Testis (tissue), 5 donors: ENCODE measurements at regions of chr5 and their contacts with region 1.

Region 1: DNA sequence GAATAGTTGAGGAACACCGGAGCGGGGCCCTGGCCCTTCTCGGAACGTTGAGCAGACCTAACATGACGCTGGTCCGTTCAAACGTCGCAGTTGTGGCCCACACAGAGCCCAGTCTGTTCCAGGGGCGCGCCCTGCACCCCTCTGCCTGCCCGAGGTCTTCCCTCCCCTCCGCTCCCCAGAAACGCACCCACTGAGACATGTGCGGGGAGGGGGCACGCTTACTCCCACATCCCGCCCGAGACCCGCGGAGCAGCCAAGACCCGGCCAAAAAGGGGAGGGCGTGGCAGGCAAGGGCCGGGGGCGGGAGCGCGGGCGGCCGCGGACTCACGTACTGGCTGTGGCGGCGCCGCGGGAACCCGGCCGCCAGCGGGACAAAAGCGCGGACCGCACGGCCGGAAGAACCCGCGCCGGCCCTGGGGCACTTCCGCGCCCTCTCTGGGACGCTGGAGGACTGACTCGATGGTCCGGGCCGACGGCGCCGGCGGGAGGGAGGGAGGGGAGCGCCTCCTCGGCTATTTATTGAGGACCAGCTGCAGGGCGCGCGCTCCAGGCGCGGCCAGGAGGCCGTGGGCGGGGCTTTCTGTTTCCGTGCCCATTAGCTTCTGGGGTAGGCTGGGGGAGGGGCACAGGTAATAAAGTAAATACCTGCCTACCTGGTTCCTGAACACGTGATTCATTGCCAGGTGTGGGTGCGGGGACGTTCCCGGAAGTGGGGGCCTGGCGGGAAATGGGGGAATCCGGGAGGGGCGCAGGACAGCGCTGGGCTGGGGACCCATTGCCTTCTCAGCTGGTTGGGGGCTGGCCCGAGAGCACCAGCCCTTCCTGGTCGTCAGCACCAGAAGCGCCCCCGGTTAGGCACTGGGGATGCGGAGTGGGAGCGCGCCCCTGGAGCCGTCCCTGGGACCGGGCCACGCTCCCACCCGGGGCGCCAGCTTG is at the start of gene ZFP62:
- DNase-seq: peak; percentile 91
- H3K4me3 ChIP-seq: peak within 1 kb of the TSS; percentile 93 to 96
- H3K27ac ChIP-seq: peak within 1 kb of the TSS; percentile 86 to 92
- H3K4me1 ChIP-seq: peaks cover 9% of the 10 kb centered on the region
- H3K27me3 ChIP-seq: no peaks in the 10 kb centered on the region
- CTCF ChIP-seq: no peak
- POLR2A ChIP-seq: no peak
- total RNA-seq, gene ZFP62: 27.1 to 32.3 TPM

Region 2: DNA sequence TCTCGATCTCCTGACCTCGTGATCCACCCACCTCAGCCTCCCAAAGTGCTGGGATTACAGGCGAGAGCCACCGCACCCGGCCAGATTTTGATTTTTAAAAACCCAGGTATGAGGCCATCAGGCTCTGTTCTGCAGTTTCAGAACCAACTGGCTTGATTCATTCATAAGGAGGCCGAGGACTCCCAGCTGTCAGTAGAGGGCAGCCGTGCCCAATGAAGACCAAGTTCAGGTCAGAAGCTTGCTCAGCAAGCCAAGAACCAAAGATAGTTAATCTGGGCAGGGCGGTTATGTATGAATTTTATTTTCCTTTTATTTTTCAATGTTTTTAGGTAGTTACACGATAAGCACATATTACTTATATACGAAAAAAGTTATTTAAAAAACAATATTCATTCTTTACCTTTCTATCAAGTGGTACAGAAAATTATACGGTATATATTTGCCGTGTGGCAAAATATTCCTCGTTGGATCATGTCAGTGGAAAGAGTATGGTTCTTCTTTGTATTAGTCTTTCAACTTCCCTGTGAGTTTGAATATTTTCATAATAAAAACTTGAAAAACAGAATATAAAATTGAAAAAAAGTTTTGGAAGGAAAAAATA is 76.6 kb before region 1 on chr5:
- intact Hi-C with region 1: loop called (anchors 5 kb)
- DNase-seq: peak; percentile 92
- H3K4me3 ChIP-seq: no peak overlapping the region
- H3K27ac ChIP-seq: peak overlapping the region; percentile 80 to 82
- H3K4me1 ChIP-seq: peaks cover 55% of the 10 kb centered on the region
- H3K27me3 ChIP-seq: no peaks in the 10 kb centered on the region
- CTCF ChIP-seq: peak; percentile 44 to 55 (median 47)
- POLR2A ChIP-seq: no peak